Calu3 (cell line): ENCODE measurements at regions of chr13 and their contacts with region 1.

Region 1: DNA sequence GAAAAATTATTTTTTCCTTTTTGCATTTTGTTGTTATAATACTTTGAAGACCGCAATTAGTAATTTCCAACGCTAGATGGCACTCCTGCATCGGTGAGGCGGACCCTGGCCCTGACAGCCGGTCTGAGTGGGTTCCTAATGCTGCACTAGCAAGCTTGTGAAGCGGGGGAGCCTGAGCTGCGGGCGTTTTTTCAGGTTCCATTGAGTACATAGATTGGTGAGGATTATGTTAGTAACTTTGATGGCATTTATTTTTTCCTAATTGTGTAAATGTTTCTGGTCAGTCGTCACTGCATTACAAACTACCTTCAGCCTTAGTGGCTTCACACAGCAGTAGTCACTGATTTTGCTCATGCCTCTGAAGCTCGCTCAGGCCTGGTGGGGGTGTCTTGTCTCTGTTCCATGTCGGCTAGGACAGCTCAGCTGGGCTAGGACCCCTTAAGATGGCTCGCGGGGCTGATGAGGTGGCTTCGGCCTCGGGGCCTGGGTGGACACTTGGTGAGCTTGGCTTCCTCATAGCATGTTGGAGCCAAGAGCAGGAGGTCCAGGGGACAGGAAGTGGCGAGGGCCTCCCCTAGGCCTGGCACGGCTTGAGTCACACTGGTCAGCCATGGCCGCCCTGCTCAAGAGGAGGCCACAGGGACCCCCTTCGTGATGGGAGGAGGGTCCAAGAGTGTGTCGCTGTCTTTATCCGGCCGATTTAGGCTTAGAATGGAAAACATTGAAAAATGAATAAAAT is 25.0 kb downstream of the ERCC5 start:
- DNase-seq: peak; percentile 43
- H3K4me3 Mint-ChIP-seq: no peak overlapping the region
- H3K27ac Mint-ChIP-seq: no peak overlapping the region
- H3K4me1 Mint-ChIP-seq: peaks cover 9% of the 10 kb centered on the region
- H3K27me3 Mint-ChIP-seq: no peaks in the 10 kb centered on the region
- CTCF ChIP-seq: peak; percentile 28

Region 2: DNA sequence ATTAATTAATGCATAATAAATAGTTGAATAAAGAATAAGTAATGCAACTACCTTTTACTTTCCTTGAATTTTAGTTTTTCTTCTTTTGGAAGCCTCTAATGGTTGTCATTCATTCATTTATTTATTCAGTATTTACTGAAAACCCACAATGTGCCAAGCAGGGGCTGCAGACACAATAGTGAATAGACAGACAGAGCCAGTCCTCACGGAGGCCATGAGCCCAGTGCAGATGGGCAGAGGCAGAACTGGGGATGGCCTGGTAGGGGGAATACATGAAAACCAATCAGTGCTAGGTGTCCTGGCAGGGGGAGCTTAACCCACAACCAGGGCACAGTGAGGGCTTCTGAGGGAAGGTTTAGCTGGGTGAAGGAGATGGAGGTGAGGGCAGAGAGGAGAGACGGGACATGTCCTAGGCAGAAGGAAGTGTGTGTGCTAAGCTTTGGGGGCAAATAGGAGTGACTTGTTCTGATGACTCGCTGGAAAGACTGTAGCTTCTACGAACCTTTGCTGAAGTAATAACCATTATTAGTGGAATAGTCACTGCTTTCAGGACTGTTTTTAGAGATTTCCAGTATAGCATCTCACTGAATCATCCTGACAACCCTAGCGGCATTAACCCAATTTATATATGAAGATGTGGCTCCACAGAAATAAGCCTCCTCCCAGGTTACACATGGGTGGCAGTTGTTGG is 30.9 kb after region 1 on chr13:
- CTCF ChIA-PET with region 1: interaction called, 4 read pairs
- intact Hi-C with region 1: loop called (anchors 2 kb)
- DNase-seq: no peak
- H3K4me3 Mint-ChIP-seq: no peak overlapping the region
- H3K27ac Mint-ChIP-seq: no peak overlapping the region
- H3K4me1 Mint-ChIP-seq: peaks cover 17% of the 10 kb centered on the region
- H3K27me3 Mint-ChIP-seq: no peaks in the 10 kb centered on the region
- CTCF ChIP-seq: no peak

Region 3: DNA sequence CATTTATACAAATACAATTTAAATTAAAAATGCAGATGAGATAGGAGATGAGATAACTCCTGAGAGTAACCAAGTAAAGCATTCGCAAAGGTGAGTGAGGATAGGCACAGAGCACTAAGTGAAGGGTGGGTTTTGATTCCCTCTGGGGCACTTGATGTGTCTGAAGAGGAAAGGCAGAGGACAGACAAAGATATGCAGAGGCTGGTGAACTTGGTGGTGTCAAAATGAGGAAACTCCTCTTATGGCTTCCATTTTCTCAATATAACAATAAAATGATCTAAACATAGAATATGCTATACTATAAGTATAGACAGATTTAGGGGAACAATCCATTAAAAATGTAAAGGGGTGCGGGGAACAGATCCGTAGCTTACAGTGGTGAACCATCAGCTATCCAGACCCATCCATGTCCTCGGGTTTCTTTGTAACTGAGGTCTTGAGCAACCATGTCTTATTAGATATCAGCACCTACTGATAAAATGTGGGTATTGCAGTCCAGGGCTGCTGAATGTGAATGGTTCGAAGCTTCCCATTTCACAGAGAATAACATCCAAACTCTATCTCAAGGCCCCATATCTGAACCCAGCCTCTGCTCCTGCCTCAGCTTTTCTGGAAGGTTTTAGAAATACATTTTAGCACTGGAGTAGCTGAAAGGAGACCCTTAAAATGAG is 269.3 kb after region 1 on chr13:
- CTCF ChIA-PET with region 1: interaction called, 7 read pairs
- intact Hi-C with region 1: loop called (anchors 1 kb)
- DNase-seq: peak; percentile 1
- H3K4me3 Mint-ChIP-seq: no peak overlapping the region
- H3K27ac Mint-ChIP-seq: no peak overlapping the region
- H3K4me1 Mint-ChIP-seq: no peaks in the 10 kb centered on the region
- H3K27me3 Mint-ChIP-seq: no peaks in the 10 kb centered on the region
- CTCF ChIP-seq: no peak

Region 4: GRCh38 chr13:103451656-103452055 is 580.8 kb after region 1 on chr13:
- CTCF ChIA-PET with region 1: no interaction called
- intact Hi-C with region 1: no loop called
- DNase-seq: no peak
- H3K4me3 Mint-ChIP-seq: no peak overlapping the region
- H3K27ac Mint-ChIP-seq: no peak overlapping the region
- H3K4me1 Mint-ChIP-seq: no peaks in the 10 kb centered on the region
- H3K27me3 Mint-ChIP-seq: no peaks in the 10 kb centered on the region
- CTCF ChIP-seq: no peak